H1 (cell line): ENCODE measurements at regions of chr12 and their contacts with region 1.

Region 1: GRCh38 chr12:71780237-71780822 is 25.7 kb downstream of the RAB21 start:
- DNase-seq: no peak
- H3K4me3 ChIP-seq: no peak overlapping the region
- H3K27ac ChIP-seq: no peak overlapping the region
- H3K4me1 ChIP-seq: no peaks in the 10 kb centered on the region
- H3K27me3 ChIP-seq: no peaks in the 10 kb centered on the region
- CTCF ChIP-seq: peak in 2 of 3 experiments; percentile 58 to 65; a peak in 3 of 4 replicates
- EP300 ChIP-seq: no peak
- POLR2A ChIP-seq: no peak
- RAD21 ChIP-seq: peak; percentile 61 to 70

Region 2: DNA sequence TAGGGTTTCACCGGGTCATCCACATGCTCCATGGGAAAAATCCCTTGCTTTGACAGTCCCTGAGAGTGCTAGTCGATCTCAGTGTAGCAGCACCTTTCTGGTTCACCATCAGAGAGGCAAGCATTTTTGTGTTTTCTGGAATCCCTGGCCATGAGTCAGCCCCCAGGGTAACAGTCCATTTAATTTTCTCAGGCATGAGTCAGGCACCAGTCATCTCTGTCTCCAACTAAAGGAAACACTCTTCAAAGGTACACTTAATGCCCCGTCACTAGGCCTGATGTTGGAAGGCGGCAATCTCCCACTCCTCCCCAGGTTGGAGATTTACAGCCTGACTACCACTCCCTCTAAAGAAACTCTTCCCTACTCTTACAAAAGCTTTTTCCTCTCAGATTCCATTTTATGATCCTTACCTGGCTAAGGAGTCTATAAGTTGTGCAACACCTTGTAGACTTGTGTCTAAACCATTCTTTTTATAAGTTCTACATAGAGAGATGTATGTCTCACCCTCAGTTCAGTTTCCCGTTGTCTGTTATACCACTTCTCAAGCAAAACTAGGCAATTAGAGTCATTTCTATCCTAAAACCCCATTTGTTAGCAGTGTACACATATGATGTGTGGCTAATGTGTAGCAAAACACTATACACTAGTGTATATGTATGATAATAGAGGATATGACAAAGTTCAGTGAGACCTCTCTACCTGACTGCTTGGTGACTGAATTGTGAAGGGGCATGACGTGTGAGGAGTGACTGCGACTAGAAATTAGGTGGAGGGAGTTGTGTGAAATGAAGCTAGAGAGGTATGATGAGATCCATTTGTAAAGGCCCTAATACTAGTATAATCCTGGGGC is 69.8 kb before region 1 on chr12:
- CTCF ChIA-PET with region 1: no interaction called
- POLR2A ChIA-PET with region 1: no interaction called
- DNase-seq: peak in 1 of 2 experiments; percentile 19
- H3K4me3 ChIP-seq: no peak overlapping the region
- H3K27ac ChIP-seq: no peak overlapping the region
- H3K4me1 ChIP-seq: no peaks in the 10 kb centered on the region
- H3K27me3 ChIP-seq: no peaks in the 10 kb centered on the region
- CTCF ChIP-seq: no peak
- EP300 ChIP-seq: no peak
- POLR2A ChIP-seq: no peak
- RAD21 ChIP-seq: no peak

Region 3: GRCh38 chr12:71760471-71760870 is 19.9 kb before region 1 on chr12:
- CTCF ChIA-PET with region 1: interaction called, 15 read pairs
- POLR2A ChIA-PET with region 1: interaction called, 4 read pairs
- DNase-seq: no peak
- H3K4me3 ChIP-seq: no peak overlapping the region
- H3K27ac ChIP-seq: no peak overlapping the region
- H3K4me1 ChIP-seq: peaks cover 0 to 4% (median 1%) of the 10 kb centered on the region in 4 experiments; a peak in 2 of 7 replicates
- H3K27me3 ChIP-seq: no peaks in the 10 kb centered on the region
- CTCF ChIP-seq: no peak
- EP300 ChIP-seq: no peak
- POLR2A ChIP-seq: no peak
- RAD21 ChIP-seq: no peak

Region 4: GRCh38 chr12:71795901-71796300 is 15.6 kb after region 1 on chr12:
- CTCF ChIA-PET with region 1: interaction called, 26 read pairs
- POLR2A ChIA-PET with region 1: interaction called, 3 read pairs
- DNase-seq: no peak
- H3K4me3 ChIP-seq: no peak overlapping the region
- H3K27ac ChIP-seq: no peak overlapping the region
- H3K4me1 ChIP-seq: no peaks in the 10 kb centered on the region
- H3K27me3 ChIP-seq: peaks cover 0 to 1% (median 0%) of the 10 kb centered on the region in 4 experiments; a peak in 1 of 7 replicates
- CTCF ChIP-seq: no peak
- EP300 ChIP-seq: no peak
- POLR2A ChIP-seq: no peak
- RAD21 ChIP-seq: no peak

Region 5: GRCh38 chr12:71810905-71811304 is 30.6 kb after region 1 on chr12:
- CTCF ChIA-PET with region 1: no interaction called
- POLR2A ChIA-PET with region 1: no interaction called
- DNase-seq: no peak
- H3K4me3 ChIP-seq: no peak overlapping the region
- H3K27ac ChIP-seq: no peak overlapping the region
- H3K4me1 ChIP-seq: no peaks in the 10 kb centered on the region
- H3K27me3 ChIP-seq: no peaks in the 10 kb centered on the region
- CTCF ChIP-seq: no peak
- EP300 ChIP-seq: no peak
- POLR2A ChIP-seq: no peak
- RAD21 ChIP-seq: no peak

Region 6: GRCh38 chr12:71846322-71846940 is 66.1 kb after region 1 on chr12:
- CTCF ChIA-PET with region 1: interaction called, 14 read pairs
- POLR2A ChIA-PET with region 1: no interaction called
- DNase-seq: no peak
- H3K4me3 ChIP-seq: no peak overlapping the region
- H3K27ac ChIP-seq: no peak overlapping the region
- H3K4me1 ChIP-seq: peaks cover 0 to 1% (median 0%) of the 10 kb centered on the region in 4 experiments; a peak in 1 of 7 replicates
- H3K27me3 ChIP-seq: no peaks in the 10 kb centered on the region
- CTCF ChIP-seq: peak in 1 of 3 experiments; percentile 48; a peak in 2 of 4 replicates
- EP300 ChIP-seq: no peak
- POLR2A ChIP-seq: no peak
- RAD21 ChIP-seq: peak; percentile 16 to 23; a peak in 3 of 4 replicates